CD8-positive, alpha-beta T cell (primary cell): ENCODE measurements at regions of chr17 and their contacts with region 1.

Region 1: GRCh38 chr17:46139432-46140210 is 53.6 kb downstream of the KANSL1 start:
- DNase-seq: no peak
- ATAC-seq: no peak
- H3K4me3 ChIP-seq: no peak overlapping the region
- H3K4me3 Mint-ChIP-seq: no peak overlapping the region
- H3K27ac ChIP-seq: no peak overlapping the region
- H3K27ac Mint-ChIP-seq: peak overlapping the region; percentile 73
- H3K4me1 ChIP-seq: peaks cover 77% of the 10 kb centered on the region
- H3K4me1 Mint-ChIP-seq: peaks cover 91% of the 10 kb centered on the region
- H3K27me3 ChIP-seq: no peaks in the 10 kb centered on the region
- H3K27me3 Mint-ChIP-seq: no peaks in the 10 kb centered on the region
- CTCF ChIP-seq: no peak

Region 2: GRCh38 chr17:45332989-45333701 is 806.5 kb before region 1 on chr17:
- CTCF ChIA-PET with region 1: no interaction called
- POLR2A ChIA-PET with region 1: no interaction called
- intact Hi-C with region 1: no loop called
- DNase-seq: no peak
- ATAC-seq: no peak
- H3K4me3 ChIP-seq: no peak overlapping the region
- H3K4me3 Mint-ChIP-seq: no peak overlapping the region
- H3K27ac ChIP-seq: no peak overlapping the region
- H3K27ac Mint-ChIP-seq: no peak overlapping the region
- H3K4me1 ChIP-seq: no peaks in the 10 kb centered on the region
- H3K4me1 Mint-ChIP-seq: peaks cover 6% of the 10 kb centered on the region
- H3K27me3 ChIP-seq: no peaks in the 10 kb centered on the region
- H3K27me3 Mint-ChIP-seq: no peaks in the 10 kb centered on the region
- CTCF ChIP-seq: no peak

Region 3: GRCh38 chr17:46092991-46093390 is 46.6 kb before region 1 on chr17:
- CTCF ChIA-PET with region 1: no interaction called
- POLR2A ChIA-PET with region 1: no interaction called
- intact Hi-C with region 1: loop called in 1 of 2 experiments (anchors 5 kb)
- DNase-seq: no peak
- ATAC-seq: no peak
- H3K4me3 ChIP-seq: no peak overlapping the region
- H3K4me3 Mint-ChIP-seq: no peak overlapping the region
- H3K27ac ChIP-seq: no peak overlapping the region
- H3K27ac Mint-ChIP-seq: no peak overlapping the region
- H3K4me1 ChIP-seq: peaks cover 11% of the 10 kb centered on the region
- H3K4me1 Mint-ChIP-seq: peaks cover 69% of the 10 kb centered on the region
- H3K27me3 ChIP-seq: no peaks in the 10 kb centered on the region
- H3K27me3 Mint-ChIP-seq: no peaks in the 10 kb centered on the region
- CTCF ChIP-seq: no peak

Region 4: GRCh38 chr17:46121841-46122485 is 17.7 kb before region 1 on chr17:
- CTCF ChIA-PET with region 1: no interaction called
- POLR2A ChIA-PET with region 1: interaction called, 3 read pairs
- intact Hi-C with region 1: loop called in 1 of 2 experiments (anchors 2 kb)
- DNase-seq: peak in 1 of 9 experiments; percentile 46
- ATAC-seq: peak; percentile 27
- H3K4me3 ChIP-seq: no peak overlapping the region
- H3K4me3 Mint-ChIP-seq: peak overlapping the region; percentile 44
- H3K27ac ChIP-seq: peak overlapping the region in 1 of 2 experiments; percentile 47
- H3K27ac Mint-ChIP-seq: peak overlapping the region; percentile 87
- H3K4me1 ChIP-seq: peaks cover 74% of the 10 kb centered on the region
- H3K4me1 Mint-ChIP-seq: peaks cover 85% of the 10 kb centered on the region
- H3K27me3 ChIP-seq: no peaks in the 10 kb centered on the region
- H3K27me3 Mint-ChIP-seq: no peaks in the 10 kb centered on the region
- CTCF ChIP-seq: no peak

Region 5: GRCh38 chr17:46154151-46154816 is 14.7 kb after region 1 on chr17:
- CTCF ChIA-PET with region 1: no interaction called
- POLR2A ChIA-PET with region 1: no interaction called
- intact Hi-C with region 1: loop called (anchors 2 kb)
- DNase-seq: peak in 4 of 9 experiments; percentile 28 to 52 (median 34)
- ATAC-seq: peak; percentile 64
- H3K4me3 ChIP-seq: no peak overlapping the region
- H3K4me3 Mint-ChIP-seq: peak overlapping the region; percentile 62
- H3K27ac ChIP-seq: peak overlapping the region in 1 of 2 experiments; percentile 49
- H3K27ac Mint-ChIP-seq: peak overlapping the region; percentile 83
- H3K4me1 ChIP-seq: peaks cover 93% of the 10 kb centered on the region
- H3K4me1 Mint-ChIP-seq: peaks cover 90% of the 10 kb centered on the region
- H3K27me3 ChIP-seq: no peaks in the 10 kb centered on the region
- H3K27me3 Mint-ChIP-seq: no peaks in the 10 kb centered on the region
- CTCF ChIP-seq: no peak

Region 6: DNA sequence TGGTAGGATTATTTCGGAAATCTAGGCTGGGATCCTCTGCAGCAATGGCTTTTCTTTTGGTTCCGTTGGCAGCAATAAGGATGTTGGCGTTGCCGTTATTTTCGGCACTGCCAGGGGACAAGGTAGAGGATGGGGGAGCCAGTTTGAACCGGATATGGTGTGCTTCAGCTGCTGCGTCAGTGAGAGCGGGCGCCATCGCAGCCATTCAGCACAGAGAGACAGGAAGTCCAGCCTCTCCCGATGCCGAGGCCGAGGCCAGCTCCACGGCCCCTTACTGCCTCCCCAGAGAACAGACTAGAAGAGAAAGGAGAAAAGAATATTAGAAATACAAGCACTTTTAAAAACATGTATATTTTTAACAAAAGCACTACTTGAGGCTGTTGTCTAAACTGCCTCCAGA is 32.3 kb after region 1 on chr17:
- CTCF ChIA-PET with region 1: no interaction called
- POLR2A ChIA-PET with region 1: no interaction called
- intact Hi-C with region 1: loop called in 1 of 2 experiments (anchors 5 kb)
- DNase-seq: peak in 4 of 9 experiments; percentile 22 to 52 (median 43)
- ATAC-seq: peak; percentile 79
- H3K4me3 ChIP-seq: no peak overlapping the region
- H3K4me3 Mint-ChIP-seq: peak overlapping the region; percentile 78
- H3K27ac ChIP-seq: peak overlapping the region in 1 of 2 experiments; percentile 43
- H3K27ac Mint-ChIP-seq: peak overlapping the region; percentile 96
- H3K4me1 ChIP-seq: peaks cover 78% of the 10 kb centered on the region
- H3K4me1 Mint-ChIP-seq: peaks cover 95% of the 10 kb centered on the region
- H3K27me3 ChIP-seq: no peaks in the 10 kb centered on the region
- H3K27me3 Mint-ChIP-seq: no peaks in the 10 kb centered on the region
- CTCF ChIP-seq: no peak